ENCODE measurements at regions of chr4 and their contacts with region 1.

Region 1: GRCh38 chr4:37561803-37562207 is 124.4 kb downstream of the RELL1 start:
- DNase-seq: peak; percentile 77
- ATAC-seq: peak; percentile 46
- H3K4me3 ChIP-seq: no peak overlapping the region
- H3K27ac ChIP-seq: peak overlapping the region; percentile 96
- H3K4me1 ChIP-seq: peaks cover 24% of the 10 kb centered on the region
- H3K27me3 ChIP-seq: no peaks in the 10 kb centered on the region
- CTCF ChIP-seq: no peak

Region 2: DNA sequence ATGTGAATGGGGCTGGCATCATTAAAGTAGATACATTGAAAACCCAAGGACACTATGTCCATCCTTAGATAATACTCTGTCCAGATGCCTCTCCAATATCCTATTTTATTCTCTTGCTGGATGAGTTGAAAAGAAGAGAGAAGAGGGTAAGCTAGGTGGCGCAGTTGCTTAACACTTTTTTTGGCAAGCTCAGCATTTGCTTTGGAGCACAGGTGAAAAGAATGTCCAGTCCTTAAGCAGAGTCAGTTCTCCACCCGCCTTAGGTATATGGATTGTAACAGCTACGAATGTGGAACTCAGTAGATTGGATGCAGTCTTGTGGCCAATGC is 108.9 kb before region 1 on chr4:
- CTCF ChIA-PET with region 1: interaction called, 8 read pairs
- POLR2A ChIA-PET with region 1: no interaction called
- intact Hi-C with region 1: loop called (anchors 1 kb)
- DNase-seq: peak; percentile 87
- ATAC-seq: peak; percentile 68
- H3K4me3 ChIP-seq: peak overlapping the region; percentile 70
- H3K27ac ChIP-seq: no peak overlapping the region
- H3K4me1 ChIP-seq: peaks cover 25% of the 10 kb centered on the region; the same call in 1 of the 2 replicates
- H3K27me3 ChIP-seq: 0 out of 2 replicates have a peak, but pooled peaks cover 3% of the 10 kb centered on the region
- CTCF ChIP-seq: peak; percentile 77

Region 3: GRCh38 chr4:37788819-37789218 is 227.0 kb after region 1 on chr4:
- CTCF ChIA-PET with region 1: no interaction called
- POLR2A ChIA-PET with region 1: no interaction called
- intact Hi-C with region 1: no loop called
- DNase-seq: no peak
- ATAC-seq: no peak
- H3K4me3 ChIP-seq: no peak overlapping the region
- H3K27ac ChIP-seq: no peak overlapping the region
- H3K4me1 ChIP-seq: no peaks in the 10 kb centered on the region
- H3K27me3 ChIP-seq: no peaks in the 10 kb centered on the region
- CTCF ChIP-seq: no peak

Measured in PC-3 (cell line).